ENCODE measurements at regions of chr10 and their contacts with region 1.

Region 1: GRCh38 chr10:33330543-33331378 is 3.7 kb downstream of the NRP1 start:
- DNase-seq: peak; percentile 59
- H3K4me3 Mint-ChIP-seq: peak overlapping the region; percentile 14
- H3K27ac Mint-ChIP-seq: no peak overlapping the region
- H3K4me1 Mint-ChIP-seq: peaks cover 28% of the 10 kb centered on the region
- H3K27me3 Mint-ChIP-seq: peaks cover 48% of the 10 kb centered on the region

Region 2: GRCh38 chr10:33193057-33193700 is 137.6 kb before region 1 on chr10:
- intact Hi-C with region 1: loop called (anchors 1 kb)
- DNase-seq: peak; percentile 57
- H3K4me3 Mint-ChIP-seq: no peak overlapping the region
- H3K27ac Mint-ChIP-seq: no peak overlapping the region
- H3K4me1 Mint-ChIP-seq: no peaks in the 10 kb centered on the region
- H3K27me3 Mint-ChIP-seq: peaks cover 35% of the 10 kb centered on the region

Region 3: DNA sequence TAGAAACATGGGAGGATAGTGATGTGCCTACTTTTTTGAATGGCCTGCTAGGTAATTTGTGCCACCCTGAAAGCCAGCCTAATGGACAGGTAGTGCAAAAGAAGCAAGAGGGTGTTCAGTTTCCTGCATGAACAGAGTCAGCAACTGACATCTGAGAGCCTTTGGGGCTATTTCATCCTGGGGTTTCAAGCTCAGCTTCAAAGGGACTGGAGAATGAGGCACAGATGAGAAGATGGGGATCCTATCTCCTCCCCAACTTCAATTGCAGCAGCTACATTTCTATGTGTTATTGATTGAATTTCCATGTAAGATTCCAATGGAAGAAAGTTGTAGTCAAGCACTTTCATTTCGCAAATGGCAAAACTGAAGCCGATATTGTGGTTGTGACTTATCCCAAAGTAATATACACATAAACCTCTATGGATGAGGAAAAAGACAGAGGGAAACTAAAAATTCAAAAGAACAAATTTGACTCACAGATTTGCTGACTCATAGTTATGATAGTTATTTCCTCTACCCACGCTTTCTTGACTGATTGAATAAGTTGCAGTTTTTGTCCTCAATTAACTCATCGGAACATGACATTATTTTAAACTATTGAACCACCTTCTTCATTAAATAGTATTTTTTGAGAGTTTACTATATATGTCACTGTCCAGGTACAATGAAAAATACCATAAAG is 46.4 kb after region 1 on chr10:
- intact Hi-C with region 1: loop called (anchors 2 kb)
- DNase-seq: no peak
- H3K4me3 Mint-ChIP-seq: no peak overlapping the region
- H3K27ac Mint-ChIP-seq: peak overlapping the region; percentile 39
- H3K4me1 Mint-ChIP-seq: peaks cover 28% of the 10 kb centered on the region
- H3K27me3 Mint-ChIP-seq: peaks cover 6% of the 10 kb centered on the region

Region 4: DNA sequence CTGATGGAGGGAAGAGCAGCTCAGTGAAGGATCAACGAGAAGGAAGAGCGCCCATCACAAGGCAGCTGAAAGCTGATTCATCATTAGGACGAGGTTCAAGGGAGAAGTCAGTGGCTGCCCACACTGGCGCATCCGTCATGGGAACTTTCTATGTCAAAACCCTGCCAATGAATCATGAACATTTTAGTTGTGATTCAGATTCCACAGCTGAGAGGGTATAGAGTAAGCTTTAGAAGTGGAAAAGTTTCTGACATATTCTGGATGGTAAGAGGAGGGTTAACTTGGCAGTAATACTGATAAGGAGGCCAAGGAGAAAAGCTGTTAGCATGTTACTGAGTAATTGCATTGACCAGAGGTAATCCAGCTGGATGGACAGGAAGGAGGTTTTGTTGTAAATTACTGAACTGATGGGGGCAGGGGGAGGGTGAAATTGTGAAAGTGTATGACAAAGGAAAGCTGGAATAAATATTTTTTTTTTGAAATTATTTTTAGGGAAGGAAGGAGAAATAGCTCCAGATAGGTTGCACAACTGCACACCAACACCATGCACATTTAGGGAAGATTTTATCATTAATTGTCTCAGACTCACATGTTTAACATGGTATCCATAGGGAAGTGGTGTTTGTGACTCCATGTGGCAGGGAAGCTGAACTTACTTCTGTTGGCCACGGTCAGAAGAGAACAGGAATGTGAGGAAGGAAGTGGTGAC is 82.0 kb after region 1 on chr10:
- intact Hi-C with region 1: loop called (anchors 10 kb)
- DNase-seq: no peak
- H3K4me3 Mint-ChIP-seq: no peak overlapping the region
- H3K27ac Mint-ChIP-seq: no peak overlapping the region
- H3K4me1 Mint-ChIP-seq: peaks cover 2% of the 10 kb centered on the region
- H3K27me3 Mint-ChIP-seq: peaks cover 37% of the 10 kb centered on the region

Region 5: GRCh38 chr10:33661580-33662336 is 331.0 kb after region 1 on chr10:
- intact Hi-C with region 1: loop called (anchors 10 kb)
- DNase-seq: no peak
- H3K4me3 Mint-ChIP-seq: no peak overlapping the region
- H3K27ac Mint-ChIP-seq: no peak overlapping the region
- H3K4me1 Mint-ChIP-seq: no peaks in the 10 kb centered on the region
- H3K27me3 Mint-ChIP-seq: peaks cover 8% of the 10 kb centered on the region

Measured in activated T-helper 2 cell treated with anti-CD3 and anti-CD28 coated beads, Interferon-gamma antibody, Interleukin-2, Interleukin-4, amounts not matched to agents 10 μg/mL and 5 μg/mL and 100 μg/mL, durations not matched to agents 14 hours and 24 hours and 36 hours (primary cell).